Astrocyte of the cerebellum (primary cell): ENCODE measurements at regions of chr20 and their contacts with region 1.

Region 1: GRCh38 chr20:62539198-62540045 is 63.6 kb upstream of the GATA5 start:
- DNase-seq: no peak
- H3K4me3 ChIP-seq: no peak overlapping the region
- CTCF ChIP-seq: no peak

Region 2: GRCh38 chr20:62433658-62434497 is 105.5 kb before region 1 on chr20:
- in situ Hi-C with region 1: loop called (anchors 5 kb)
- DNase-seq: no peak
- H3K4me3 ChIP-seq: no peak overlapping the region
- CTCF ChIP-seq: no peak

Region 3: DNA sequence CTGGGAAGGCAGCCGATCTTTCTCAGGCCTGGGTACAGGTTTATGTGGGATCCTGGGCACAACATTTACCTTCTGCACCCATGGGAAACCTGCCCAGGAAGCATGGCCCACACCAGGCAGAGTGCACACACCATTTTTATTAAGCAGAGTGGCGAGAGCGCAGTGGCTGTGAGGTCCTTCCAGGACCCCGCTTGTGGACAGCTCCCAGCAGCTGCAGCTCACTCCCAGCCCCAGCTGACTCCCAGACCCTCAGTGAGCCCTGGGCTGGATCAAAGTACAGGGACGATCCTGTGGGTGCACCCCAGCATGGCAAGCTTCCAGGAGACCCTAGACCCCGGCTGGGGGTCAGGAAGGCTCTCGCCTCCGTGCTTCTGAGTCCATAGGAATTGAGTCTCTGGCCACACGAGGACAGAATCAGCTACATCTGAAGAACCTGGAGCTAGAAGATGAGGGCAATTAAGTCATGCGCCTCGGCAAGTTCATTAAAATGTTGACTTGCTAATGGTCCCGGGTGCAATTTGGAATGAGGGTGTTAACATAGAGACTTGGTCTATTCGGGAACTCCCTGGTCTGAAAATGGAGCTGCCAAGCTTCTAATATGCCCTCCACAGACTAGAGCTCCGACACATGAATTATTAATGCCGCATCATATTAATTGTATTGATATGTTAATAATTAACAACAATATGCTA is 37.5 kb after region 1 on chr20:
- in situ Hi-C with region 1: loop called (anchors 5 kb)
- DNase-seq: no peak
- H3K4me3 ChIP-seq: no peak overlapping the region
- CTCF ChIP-seq: no peak

Region 4: DNA sequence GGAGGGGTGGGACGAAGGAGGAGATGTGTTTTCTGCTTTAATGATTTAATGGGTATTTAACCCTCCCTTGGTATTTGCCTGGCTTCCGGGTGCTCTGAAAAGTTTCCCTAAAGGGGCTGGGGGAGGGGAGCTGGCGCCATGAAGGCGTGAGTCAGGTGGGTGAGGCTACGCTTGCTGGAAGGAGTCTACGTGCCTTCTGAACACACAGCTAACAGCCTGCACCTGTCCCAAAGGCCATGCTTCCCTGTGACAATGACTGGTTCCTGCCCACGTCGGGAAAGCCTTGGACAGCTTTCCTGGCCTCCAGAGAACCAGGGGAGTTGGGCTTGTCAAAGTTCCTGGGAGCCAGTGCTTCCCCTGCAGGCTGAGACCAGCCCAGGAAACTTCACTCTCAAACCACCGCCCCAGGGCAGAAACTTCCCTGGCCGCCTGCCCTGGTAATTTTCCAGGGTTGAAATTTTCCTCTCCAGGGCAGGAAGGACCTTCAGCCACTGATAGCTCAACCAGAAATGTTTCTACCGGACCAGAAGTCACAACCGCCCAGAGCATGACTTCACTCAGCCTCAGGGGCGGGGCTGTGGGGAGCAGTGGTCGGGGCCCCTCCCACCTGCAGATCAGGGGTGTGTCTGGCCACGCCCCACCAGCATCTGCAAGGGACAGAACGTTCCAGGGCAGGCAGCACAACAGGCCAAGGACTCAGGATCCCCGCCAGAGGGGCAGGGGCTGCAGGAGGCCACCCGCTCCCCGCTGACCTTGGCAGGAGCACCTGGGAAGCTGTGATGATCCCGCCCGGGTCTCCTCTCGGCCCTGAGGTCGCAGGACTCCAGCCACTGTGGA is 84.3 kb after region 1 on chr20:
- in situ Hi-C with region 1: loop called (anchors 5 kb)
- DNase-seq: peak; percentile 23
- H3K4me3 ChIP-seq: no peak overlapping the region
- CTCF ChIP-seq: no peak